ENCODE measurements at regions of chr17 and their contacts with region 1.

Region 1: GRCh38 chr17:68368387-68368786 is 77.1 kb downstream of the ARSG start:
- DNase-seq: no peak
- ATAC-seq: no peak
- H3K4me3 ChIP-seq: no peak overlapping the region
- H3K4me3 Mint-ChIP-seq: no peak overlapping the region
- H3K27ac ChIP-seq: no peak overlapping the region
- H3K27ac Mint-ChIP-seq: no peak overlapping the region
- H3K4me1 ChIP-seq: no peaks in the 10 kb centered on the region
- H3K4me1 Mint-ChIP-seq: no peaks in the 10 kb centered on the region
- H3K27me3 ChIP-seq: no peaks in the 10 kb centered on the region
- H3K27me3 Mint-ChIP-seq: no peaks in the 10 kb centered on the region
- CTCF ChIP-seq: no peak

Region 2: GRCh38 chr17:68491381-68492231 is 123.2 kb after region 1 on chr17:
- CTCF ChIA-PET with region 1: no interaction called
- POLR2A ChIA-PET with region 1: interaction called, 11 read pairs
- intact Hi-C with region 1: no loop called
- DNase-seq: peak; percentile 52
- ATAC-seq: peak; percentile 69
- H3K4me3 ChIP-seq: no peak overlapping the region
- H3K4me3 Mint-ChIP-seq: peak overlapping the region; percentile 8
- H3K27ac ChIP-seq: peak overlapping the region in 1 of 2 donors; percentile 19
- H3K27ac Mint-ChIP-seq: peak overlapping the region; percentile 32
- H3K4me1 ChIP-seq: peaks cover 21 to 31% of the 10 kb centered on the region in 2 donors
- H3K4me1 Mint-ChIP-seq: peaks cover 23% of the 10 kb centered on the region
- H3K27me3 ChIP-seq: no peaks in the 10 kb centered on the region
- H3K27me3 Mint-ChIP-seq: no peaks in the 10 kb centered on the region
- CTCF ChIP-seq: no peak